ENCODE measurements at regions of chr12 and their contacts with region 1.

Region 1: DNA sequence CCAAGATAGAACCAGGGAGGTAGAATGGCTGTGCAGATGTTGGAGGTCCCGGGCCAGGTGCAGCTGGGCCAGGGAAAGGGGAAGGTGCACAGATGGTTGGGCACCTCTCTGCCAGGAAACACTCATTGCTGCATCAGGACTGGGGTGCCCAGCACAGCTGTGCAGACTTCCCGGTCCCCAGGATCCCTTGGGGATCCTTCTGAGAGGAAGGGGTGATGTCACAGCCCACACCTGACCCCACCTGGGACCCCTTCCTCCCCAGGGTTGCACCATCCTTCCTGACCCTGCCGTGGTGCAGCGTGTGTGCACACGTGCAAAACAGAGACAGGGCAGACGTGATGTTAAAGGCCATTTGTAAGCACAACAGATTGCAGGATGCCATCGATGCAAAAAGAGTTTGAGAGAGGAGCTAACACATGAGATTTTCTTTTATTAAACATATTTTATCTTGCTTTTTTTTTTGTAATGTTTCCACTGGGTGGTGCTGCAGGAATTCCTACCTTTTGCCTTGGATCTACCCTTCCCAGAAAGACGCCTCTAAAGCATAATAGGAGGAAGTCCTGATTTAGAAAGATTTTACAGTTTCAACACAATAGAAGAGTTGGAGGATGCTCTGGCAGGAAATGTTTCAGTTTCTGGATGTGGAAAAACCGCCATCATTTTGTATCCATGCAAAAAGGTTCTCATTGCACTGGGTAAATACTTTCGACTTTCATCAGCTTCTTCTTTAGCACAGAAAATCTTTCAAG is 14.8 kb downstream of the ELK3 start:
- H3K4me3 ChIP-seq: no peak overlapping the region
- H3K27ac ChIP-seq: no peak overlapping the region
- H3K4me1 ChIP-seq: no peaks in the 10 kb centered on the region
- CTCF ChIP-seq: 0 out of 2 replicates have a peak, but pooled peaks have one; percentile 10

Region 2: GRCh38 chr12:96061864-96062453 is 147.0 kb before region 1 on chr12:
- CTCF ChIA-PET with region 1: interaction called, 17 read pairs
- POLR2A ChIA-PET with region 1: no interaction called
- H3K4me3 ChIP-seq: no peak overlapping the region
- H3K27ac ChIP-seq: no peak overlapping the region
- H3K4me1 ChIP-seq: no peaks in the 10 kb centered on the region
- CTCF ChIP-seq: peak; percentile 60

Region 3: DNA sequence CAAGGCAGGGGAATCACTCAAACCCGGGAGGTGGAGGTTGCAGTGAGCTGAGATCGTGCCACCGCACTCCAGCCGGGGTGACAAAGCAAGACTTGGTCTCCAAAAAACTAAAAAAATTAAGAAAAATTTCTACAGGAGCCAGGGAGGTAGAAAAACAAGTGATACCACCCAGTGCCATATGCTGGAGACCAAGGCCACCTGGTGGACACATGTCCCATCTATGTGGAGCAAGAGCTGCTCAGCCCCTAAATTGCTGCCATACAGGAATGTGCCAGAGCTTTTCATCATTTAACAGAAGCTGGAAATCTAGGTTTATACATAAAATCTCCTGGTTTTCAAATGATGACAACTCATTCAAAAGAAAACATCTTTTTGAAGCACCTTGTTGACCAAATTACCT is 76.2 kb before region 1 on chr12:
- CTCF ChIA-PET with region 1: no interaction called
- POLR2A ChIA-PET with region 1: no interaction called
- H3K4me3 ChIP-seq: no peak overlapping the region
- H3K27ac ChIP-seq: no peak overlapping the region
- H3K4me1 ChIP-seq: no peaks in the 10 kb centered on the region
- CTCF ChIP-seq: no peak

Region 4: GRCh38 chr12:96190413-96191108 is 18.4 kb before region 1 on chr12:
- CTCF ChIA-PET with region 1: no interaction called
- POLR2A ChIA-PET with region 1: no interaction called
- H3K4me3 ChIP-seq: no peak overlapping the region
- H3K27ac ChIP-seq: no peak overlapping the region
- H3K4me1 ChIP-seq: no peaks in the 10 kb centered on the region
- CTCF ChIP-seq: no peak